Activated naive CD4-positive, alpha-beta T cell treated with anti-CD3 and anti-CD28 coated beads for 36 hours (primary cell): ENCODE measurements at regions of chr11 and their contacts with region 1.

Region 1: GRCh38 chr11:86068951-86069407 is at the start of gene PICALM:
- DNase-seq: peak; percentile 99
- H3K4me3 Mint-ChIP-seq: peak within 1 kb of the TSS; percentile 95
- H3K27ac Mint-ChIP-seq: peak within 1 kb of the TSS; percentile 95
- H3K4me1 Mint-ChIP-seq: peaks cover 29% of the 10 kb centered on the region
- H3K27me3 Mint-ChIP-seq: no peaks in the 10 kb centered on the region
- total RNA-seq, gene PICALM: 38.6 to 42.3 TPM

Region 2: GRCh38 chr11:85647604-85648299 is 421.2 kb before region 1 on chr11 and contains the start of gene TMEM126A:
- CTCF ChIA-PET with region 1: no interaction called
- intact Hi-C with region 1: loop called (anchors 5 kb)
- DNase-seq: peak; percentile 96
- H3K4me3 Mint-ChIP-seq: peak within 1 kb of the TSS; percentile 90
- H3K27ac Mint-ChIP-seq: peak within 1 kb of the TSS; percentile 96
- H3K4me1 Mint-ChIP-seq: peaks cover 29% of the 10 kb centered on the region
- H3K27me3 Mint-ChIP-seq: peaks cover 6% of the 10 kb centered on the region
- total RNA-seq, gene TMEM126A: 47.5 to 56.2 TPM

Region 3: GRCh38 chr11:85682330-85683305 is 386.4 kb before region 1 on chr11:
- CTCF ChIA-PET with region 1: no interaction called
- intact Hi-C with region 1: no loop called
- DNase-seq: peak; percentile 72
- H3K4me3 Mint-ChIP-seq: peak overlapping the region; percentile 73
- H3K27ac Mint-ChIP-seq: peak overlapping the region; percentile 57
- H3K4me1 Mint-ChIP-seq: peaks cover 12% of the 10 kb centered on the region
- H3K27me3 Mint-ChIP-seq: no peaks in the 10 kb centered on the region

Region 4: GRCh38 chr11:85826116-85826855 is 242.7 kb before region 1 on chr11:
- CTCF ChIA-PET with region 1: no interaction called
- intact Hi-C with region 1: loop called (anchors 2 kb)
- DNase-seq: peak; percentile 51
- H3K4me3 Mint-ChIP-seq: peak overlapping the region; percentile 28
- H3K27ac Mint-ChIP-seq: peak overlapping the region; percentile 20
- H3K4me1 Mint-ChIP-seq: peaks cover 57% of the 10 kb centered on the region
- H3K27me3 Mint-ChIP-seq: no peaks in the 10 kb centered on the region

Region 5: DNA sequence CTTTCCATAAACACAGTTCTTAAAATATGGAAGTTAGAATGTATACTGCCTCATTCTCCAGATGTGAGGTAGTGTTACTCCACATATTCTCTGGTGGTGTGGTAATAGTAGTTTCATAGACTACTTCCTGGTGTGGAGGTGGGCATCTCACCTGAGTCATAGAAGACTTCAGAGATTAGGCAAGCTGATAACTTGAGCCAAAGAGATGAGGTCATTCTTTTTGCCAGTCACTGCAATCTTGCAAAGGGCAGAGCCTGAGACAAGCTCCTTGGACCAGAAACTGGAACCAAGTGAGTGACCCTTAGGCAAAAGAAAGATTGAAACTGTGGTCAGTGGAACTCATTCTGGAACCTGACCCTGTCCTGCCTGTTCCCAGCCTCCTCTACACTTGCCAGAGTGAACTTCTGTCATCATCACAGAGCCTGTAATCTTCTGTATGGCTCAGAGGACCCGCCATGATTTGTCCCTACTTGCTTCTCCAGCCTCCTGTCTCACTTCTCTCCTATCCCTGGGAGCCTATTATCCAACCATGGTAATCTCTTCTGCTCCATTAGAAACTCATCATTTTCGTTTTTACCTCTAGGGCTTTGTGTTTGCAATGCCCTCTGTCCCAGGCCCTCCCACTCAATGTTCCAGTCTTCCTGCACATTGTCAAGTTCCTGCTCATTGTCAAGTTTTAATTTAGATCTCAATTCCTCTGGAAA is 224.4 kb before region 1 on chr11:
- CTCF ChIA-PET with region 1: no interaction called
- intact Hi-C with region 1: no loop called
- DNase-seq: no peak
- H3K4me3 Mint-ChIP-seq: no peak overlapping the region
- H3K27ac Mint-ChIP-seq: no peak overlapping the region
- H3K4me1 Mint-ChIP-seq: peaks cover 6% of the 10 kb centered on the region
- H3K27me3 Mint-ChIP-seq: no peaks in the 10 kb centered on the region

Region 6: DNA sequence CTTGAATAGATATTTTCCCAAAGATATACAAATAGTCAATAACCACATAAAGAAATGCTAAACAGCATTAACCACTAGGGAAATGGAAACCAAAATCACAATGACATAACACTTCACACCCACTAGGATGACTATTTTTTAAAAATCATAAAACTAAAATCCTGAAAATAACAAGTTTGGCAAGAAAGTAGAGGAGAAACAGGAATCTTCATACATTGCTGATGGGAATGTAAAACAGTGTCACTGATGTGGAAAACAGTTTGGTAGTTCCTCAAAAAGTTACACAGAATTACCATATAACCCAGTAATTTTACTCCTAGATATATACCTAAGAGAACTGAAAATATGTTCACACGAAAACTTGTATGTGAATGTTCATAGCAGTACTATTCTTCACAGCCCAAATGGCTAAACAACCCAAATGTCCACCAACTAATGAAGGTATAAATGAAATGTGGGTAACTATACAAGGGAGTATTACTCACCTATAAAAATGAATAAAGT is 12.6 kb before region 1 on chr11:
- CTCF ChIA-PET with region 1: interaction called, 3 read pairs
- intact Hi-C with region 1: loop called (anchors 1 kb)
- DNase-seq: no peak
- H3K4me3 Mint-ChIP-seq: no peak overlapping the region
- H3K27ac Mint-ChIP-seq: peak overlapping the region; percentile 65
- H3K4me1 Mint-ChIP-seq: peaks cover 90% of the 10 kb centered on the region
- H3K27me3 Mint-ChIP-seq: no peaks in the 10 kb centered on the region

Region 7: GRCh38 chr11:86091566-86091965 is 22.6 kb after region 1 on chr11:
- CTCF ChIA-PET with region 1: no interaction called
- intact Hi-C with region 1: no loop called
- DNase-seq: no peak
- H3K4me3 Mint-ChIP-seq: no peak overlapping the region
- H3K27ac Mint-ChIP-seq: no peak overlapping the region
- H3K4me1 Mint-ChIP-seq: no peaks in the 10 kb centered on the region
- H3K27me3 Mint-ChIP-seq: peaks cover 11% of the 10 kb centered on the region

Region 8: GRCh38 chr11:86129740-86130540 is 61.0 kb after region 1 on chr11:
- CTCF ChIA-PET with region 1: no interaction called
- intact Hi-C with region 1: no loop called
- DNase-seq: no peak
- H3K4me3 Mint-ChIP-seq: no peak overlapping the region
- H3K27ac Mint-ChIP-seq: no peak overlapping the region
- H3K4me1 Mint-ChIP-seq: peaks cover 1% of the 10 kb centered on the region
- H3K27me3 Mint-ChIP-seq: peaks cover 1% of the 10 kb centered on the region

Region 9: DNA sequence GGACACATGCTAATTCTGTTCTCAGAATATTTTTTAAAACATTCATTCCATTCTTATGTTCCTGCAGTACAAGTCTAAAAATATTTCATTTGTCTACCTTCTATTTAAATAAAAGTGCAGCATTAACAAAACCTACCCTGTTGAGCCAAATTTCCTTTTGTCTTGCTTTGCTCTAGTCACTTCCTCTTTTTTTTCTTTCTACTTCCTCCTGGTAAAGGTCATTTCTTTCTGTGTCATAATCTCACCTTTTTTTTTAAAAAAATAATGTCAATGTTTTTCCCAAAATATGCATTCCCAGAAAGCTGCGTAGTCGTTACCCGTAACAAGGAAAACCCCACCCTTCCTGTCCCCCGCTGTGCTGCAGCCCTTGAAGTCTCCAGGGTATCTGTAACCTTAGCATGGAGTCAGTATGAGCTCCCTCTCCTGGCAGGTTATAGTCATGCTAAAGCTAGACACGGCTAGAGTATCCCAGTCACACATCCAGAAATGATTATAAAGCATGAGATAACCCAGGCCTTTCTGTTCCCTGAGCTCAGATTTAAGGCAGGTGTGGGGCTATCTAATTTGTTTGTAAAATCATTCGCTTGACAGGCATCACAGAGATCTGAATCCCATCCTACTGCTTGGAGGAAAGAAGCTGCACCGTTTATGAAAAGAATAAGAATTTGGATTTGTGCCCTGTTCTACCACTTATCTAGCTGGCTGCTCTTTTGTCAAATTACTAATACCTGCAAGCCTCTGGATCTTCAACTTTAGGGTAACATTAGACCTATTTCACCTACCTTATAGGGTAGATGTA is 124.5 kb after region 1 on chr11:
- CTCF ChIA-PET with region 1: interaction called, 42 read pairs
- intact Hi-C with region 1: loop called (anchors 1 kb)
- DNase-seq: peak; percentile 74
- H3K4me3 Mint-ChIP-seq: peak overlapping the region; percentile 52
- H3K27ac Mint-ChIP-seq: peak overlapping the region; percentile 73
- H3K4me1 Mint-ChIP-seq: peaks cover 19% of the 10 kb centered on the region
- H3K27me3 Mint-ChIP-seq: no peaks in the 10 kb centered on the region

Region 10: GRCh38 chr11:86230921-86231430 is 162.0 kb after region 1 on chr11:
- CTCF ChIA-PET with region 1: interaction called, 4 read pairs
- intact Hi-C with region 1: loop called (anchors 1 kb)
- DNase-seq: no peak
- H3K4me3 Mint-ChIP-seq: no peak overlapping the region
- H3K27ac Mint-ChIP-seq: peak overlapping the region; percentile 15
- H3K4me1 Mint-ChIP-seq: peaks cover 62% of the 10 kb centered on the region
- H3K27me3 Mint-ChIP-seq: no peaks in the 10 kb centered on the region

Region 11: GRCh38 chr11:87037450-87038234 is 968.7 kb after region 1 on chr11 and contains the start of gene TMEM135:
- CTCF ChIA-PET with region 1: no interaction called
- intact Hi-C with region 1: loop called (anchors 5 kb)
- DNase-seq: peak; percentile 95
- H3K4me3 Mint-ChIP-seq: peak within 1 kb of the TSS; percentile 98
- H3K27ac Mint-ChIP-seq: peak within 1 kb of the TSS; percentile 88
- H3K4me1 Mint-ChIP-seq: peaks cover 32% of the 10 kb centered on the region
- H3K27me3 Mint-ChIP-seq: no peaks in the 10 kb centered on the region
- total RNA-seq, gene TMEM135: 21.8 to 24.8 TPM